Psoas muscle (tissue), 8 donors: ENCODE measurements at regions of chr9 and their contacts with region 1.

Region 1: DNA sequence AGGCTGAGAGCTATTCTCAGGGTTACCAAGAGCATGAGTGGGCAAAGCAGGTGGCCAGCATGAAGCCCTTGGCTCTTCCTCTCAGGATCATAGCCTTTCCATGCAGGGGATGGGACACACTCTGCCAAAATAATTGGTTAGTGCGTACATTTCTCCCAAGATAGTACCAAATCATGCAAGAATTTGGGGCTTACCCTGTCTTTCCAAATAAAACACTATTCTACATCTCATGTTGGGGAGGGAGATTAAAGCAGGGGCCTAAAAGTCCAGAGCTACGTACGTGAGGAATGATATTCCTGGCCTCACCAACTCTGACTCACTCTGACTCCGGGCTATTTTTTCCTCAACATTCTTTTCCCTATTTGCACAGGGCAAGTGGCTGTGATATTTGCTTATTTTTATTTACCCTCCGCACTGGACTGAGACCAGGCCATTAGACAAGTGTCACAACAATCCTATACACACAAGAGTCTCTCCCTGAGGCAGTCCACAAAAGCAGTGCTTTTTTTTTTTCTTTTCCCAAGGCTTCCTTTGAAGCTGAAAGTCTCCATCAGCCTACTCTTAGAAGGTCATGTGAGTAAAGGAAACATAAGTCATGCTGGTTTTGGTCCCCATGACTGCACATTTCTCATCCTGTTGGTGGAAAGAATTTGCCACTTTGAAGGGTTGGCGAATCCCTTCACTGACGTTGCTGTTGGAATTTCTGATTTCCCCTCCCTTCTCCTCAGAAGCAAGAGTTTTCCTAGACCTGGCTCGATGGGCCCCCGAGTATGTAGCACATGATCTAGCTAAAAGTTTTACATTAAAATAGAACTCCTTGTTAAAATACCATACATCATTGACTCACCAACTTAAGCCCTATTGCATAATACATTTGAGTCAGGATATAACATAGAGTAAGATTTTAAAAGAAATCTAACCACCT is 40.0 kb downstream of the TMEM252 start:
- DNase-seq: no peak
- ATAC-seq: peak; percentile 71 to 93 (median 90)
- H3K4me3 ChIP-seq: no peak overlapping the region
- H3K27ac ChIP-seq: peak overlapping the region; percentile 43
- H3K4me1 ChIP-seq: peaks cover 14% of the 10 kb centered on the region
- H3K27me3 ChIP-seq: no peaks in the 10 kb centered on the region
- CTCF ChIP-seq: no peak

Region 2: DNA sequence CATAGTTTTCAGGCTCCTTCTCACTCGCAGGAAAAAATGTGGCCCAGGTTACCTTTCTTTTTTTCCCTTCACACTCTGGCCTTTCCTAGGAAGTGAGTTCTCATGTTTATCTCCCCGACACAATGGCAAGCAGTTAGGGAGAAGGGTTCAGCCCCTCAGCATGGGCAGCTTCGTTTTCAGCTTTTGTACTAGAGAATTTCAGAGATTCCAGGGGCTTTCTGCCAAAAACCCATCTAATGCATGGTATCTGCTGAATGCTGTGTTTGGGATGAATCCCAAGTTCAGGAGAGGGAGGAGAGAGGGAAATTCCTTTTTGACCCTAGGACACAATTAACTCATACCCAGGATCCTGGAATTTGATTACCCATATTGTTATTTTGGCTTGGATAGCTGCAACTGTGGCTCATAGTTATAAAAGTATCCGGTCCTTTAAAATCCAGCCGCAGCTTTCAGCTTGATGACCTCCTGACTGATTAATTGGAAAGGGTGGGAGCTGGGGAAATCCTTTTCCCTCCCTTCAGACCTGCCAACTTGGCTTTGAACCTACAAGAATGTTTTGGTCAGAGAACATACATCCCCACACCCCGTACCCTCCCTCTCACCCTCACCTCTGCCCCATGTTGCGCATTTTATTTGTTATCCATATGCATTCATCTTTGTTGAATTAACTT is 38.5 kb before region 1 on chr9:
- intact Hi-C with region 1: no loop called
- DNase-seq: no peak
- ATAC-seq: no peak
- H3K4me3 ChIP-seq: no peak overlapping the region
- H3K27ac ChIP-seq: no peak overlapping the region
- H3K4me1 ChIP-seq: no peaks in the 10 kb centered on the region
- H3K27me3 ChIP-seq: no peaks in the 10 kb centered on the region
- CTCF ChIP-seq: no peak

Region 3: DNA sequence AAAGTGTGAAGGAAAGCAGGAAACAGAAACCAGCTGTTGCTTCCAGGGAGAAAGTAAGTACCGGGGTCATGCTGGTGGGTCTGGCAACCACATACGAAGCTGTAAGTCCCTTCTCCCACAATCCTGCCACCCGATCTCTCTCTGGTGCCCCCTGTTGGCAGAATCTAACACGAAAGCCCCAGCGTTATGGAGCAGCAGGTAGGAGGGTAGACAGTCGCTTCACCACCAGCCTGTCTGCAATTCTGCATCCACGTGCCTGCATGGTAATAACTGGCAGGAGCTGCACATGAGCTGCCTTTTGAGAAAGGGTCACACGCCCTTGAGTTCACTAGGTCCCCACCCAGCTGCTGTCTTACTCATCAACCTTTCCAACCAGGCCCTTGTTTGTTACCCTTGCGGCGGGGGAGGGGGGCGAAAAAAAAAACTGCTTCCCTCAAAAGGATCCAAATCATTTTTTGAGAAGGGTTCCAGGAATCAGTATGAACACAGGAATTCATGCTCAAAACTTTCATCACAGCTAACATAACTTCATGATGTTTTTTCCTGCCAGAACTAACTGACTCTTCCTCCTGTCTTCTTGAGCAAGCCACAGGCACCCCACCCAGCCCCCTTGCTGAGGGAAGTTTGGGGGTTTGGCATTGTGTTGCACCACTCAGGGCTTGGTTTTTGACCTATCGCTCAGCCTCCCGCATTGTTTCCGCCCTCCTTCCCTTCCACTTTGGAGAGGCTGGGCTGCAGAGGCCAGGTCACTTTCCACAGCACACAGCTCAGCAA is 59.5 kb after region 1 on chr9:
- intact Hi-C with region 1: loop called in 1 of 2 experiments (anchors 5 kb)
- DNase-seq: peak; percentile 39 to 67
- ATAC-seq: peak in 3 of 4 donors; percentile 44 to 88 (median 76)
- H3K4me3 ChIP-seq: no peak overlapping the region
- H3K27ac ChIP-seq: no peak overlapping the region
- H3K4me1 ChIP-seq: no peaks in the 10 kb centered on the region
- H3K27me3 ChIP-seq: peaks cover 0 to 3% (median 0%) of the 10 kb centered on the region in 3 donors
- CTCF ChIP-seq: peak; percentile 45